Esophagus muscularis mucosa (tissue), 4 donors: ENCODE measurements at regions of chr16 and their contacts with region 1.

Region 1: DNA sequence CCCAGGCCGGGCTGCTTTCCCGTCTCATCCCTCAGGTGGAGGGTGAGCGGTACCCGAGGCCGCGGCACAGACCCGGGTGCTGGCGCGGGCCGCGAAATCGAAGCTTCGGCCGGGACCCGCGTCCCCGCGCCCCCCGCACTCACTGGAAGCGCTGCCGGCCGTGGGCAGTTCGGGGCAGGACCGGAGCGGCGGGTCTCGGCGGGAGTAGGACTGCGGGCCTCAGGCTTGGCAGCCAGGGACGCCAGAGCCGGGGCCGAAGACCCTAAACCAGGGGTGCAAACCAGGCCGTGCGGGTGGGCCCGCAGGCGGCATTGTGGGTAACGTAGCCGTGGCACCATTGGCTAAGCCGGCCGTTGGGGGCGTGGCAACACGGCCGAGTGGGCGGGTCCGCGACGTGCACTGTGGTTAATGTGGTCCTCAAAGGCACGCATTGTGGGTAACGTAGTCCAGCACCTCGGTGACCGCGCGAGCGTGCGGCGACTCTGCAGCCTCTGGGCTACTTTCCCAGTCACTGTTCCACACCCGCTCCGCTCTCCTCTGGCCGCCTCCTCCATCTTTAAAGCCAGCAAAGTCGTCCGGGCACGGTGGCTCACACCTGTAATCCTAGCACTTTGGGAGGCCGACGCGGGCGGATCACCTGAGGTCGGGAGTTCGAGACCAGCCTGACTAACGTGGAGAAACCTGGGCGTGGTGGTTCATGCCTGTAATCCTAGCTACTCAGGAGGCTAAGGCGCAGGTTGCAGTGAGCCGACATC is at the start of gene ZNF500:
- DNase-seq: peak; percentile 100
- H3K4me3 ChIP-seq: peak within 1 kb of the TSS; percentile 89 to 95 (median 94)
- H3K27ac ChIP-seq: peak within 1 kb of the TSS; percentile 86 to 91 (median 90)
- H3K4me1 ChIP-seq: peaks cover 35 to 54% (median 43%) of the 10 kb centered on the region in 4 donors
- H3K27me3 ChIP-seq: no peaks in the 10 kb centered on the region
- CTCF ChIP-seq: no peak
- EP300 ChIP-seq: no peak
- POLR2A ChIP-seq: no peak
- total RNA-seq, gene ZNF500: 7.5 to 19.4 (median 13.9) TPM

Region 2: GRCh38 chr16:4814542-4815173 is 47.6 kb after region 1 on chr16:
- intact Hi-C with region 1: loop called (anchors 5 kb)
- DNase-seq: no peak
- H3K4me3 ChIP-seq: peak overlapping the region in 2 of 4 donors; percentile 20
- H3K27ac ChIP-seq: peak overlapping the region; percentile 84 to 87 (median 84)
- H3K4me1 ChIP-seq: peaks cover 21 to 40% (median 28%) of the 10 kb centered on the region in 4 donors
- H3K27me3 ChIP-seq: no peaks in the 10 kb centered on the region
- CTCF ChIP-seq: peak in 2 of 3 experiments; percentile 12 to 15
- EP300 ChIP-seq: no peak
- POLR2A ChIP-seq: no peak

Region 3: DNA sequence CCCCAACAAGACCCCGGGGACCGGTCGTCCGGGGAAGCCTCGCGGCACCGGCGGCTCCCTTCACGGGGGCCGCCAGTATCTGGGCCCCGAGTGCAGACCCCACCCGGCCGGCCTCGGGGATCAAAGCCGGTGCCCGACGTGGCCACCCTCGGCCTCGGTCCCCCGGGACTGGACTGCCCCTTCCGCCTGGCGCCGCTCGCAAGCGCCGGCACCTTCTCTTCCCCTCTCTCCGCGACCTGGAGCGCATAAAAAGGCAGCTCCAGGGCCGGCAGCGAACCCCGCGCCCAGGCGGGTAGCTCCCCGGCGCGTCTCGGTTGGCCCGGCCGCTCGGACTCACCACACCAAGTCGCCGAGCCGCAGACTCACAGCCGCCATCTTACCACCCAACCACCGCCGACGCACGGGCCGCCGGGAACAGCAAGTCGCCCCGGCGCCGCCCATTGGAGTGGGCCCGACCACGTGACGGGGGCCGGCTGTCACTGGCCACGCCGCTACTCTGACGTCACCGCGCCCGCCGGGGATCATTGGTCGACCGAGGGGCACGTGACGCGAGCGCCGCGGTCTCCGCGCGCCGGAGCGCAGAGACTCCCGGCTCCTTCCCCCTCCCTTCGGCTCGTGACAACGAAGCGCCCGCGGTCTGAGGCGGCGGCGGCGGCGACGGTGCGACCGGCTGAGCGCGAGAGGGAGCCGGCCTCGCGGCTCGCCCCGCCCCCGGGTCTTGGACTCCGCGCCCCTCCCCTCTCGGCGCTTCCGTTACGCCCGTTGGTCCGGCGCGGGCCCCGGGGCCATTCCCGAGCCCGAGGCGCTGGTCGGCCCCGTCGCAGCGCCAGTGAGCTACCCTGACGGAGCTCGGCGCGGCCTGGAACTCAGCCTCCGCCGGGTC is 80.1 kb after region 1 on chr16 and contains the starts of genes GLYR1 and UBN1:
- intact Hi-C with region 1: loop called (anchors 5 kb)
- DNase-seq: peak; percentile 100
- H3K4me3 ChIP-seq: peak within 1 kb of the TSS; percentile 90 to 97 (median 94)
- H3K27ac ChIP-seq: peak within 1 kb of the TSS; percentile 97 to 99 (median 97)
- H3K4me1 ChIP-seq: peaks cover 52 to 61% (median 59%) of the 10 kb centered on the region in 4 donors
- H3K27me3 ChIP-seq: no peaks in the 10 kb centered on the region
- CTCF ChIP-seq: no peak
- EP300 ChIP-seq: no peak
- POLR2A ChIP-seq: peak; percentile 41
- total RNA-seq, gene GLYR1: 81.8 to 111 (median 98.8) TPM
- total RNA-seq, gene UBN1: 21.0 to 48.2 (median 41.1) TPM